Breast epithelium (tissue), 4 donors: ENCODE measurements at regions of chr4 and their contacts with region 1.

Region 1: DNA sequence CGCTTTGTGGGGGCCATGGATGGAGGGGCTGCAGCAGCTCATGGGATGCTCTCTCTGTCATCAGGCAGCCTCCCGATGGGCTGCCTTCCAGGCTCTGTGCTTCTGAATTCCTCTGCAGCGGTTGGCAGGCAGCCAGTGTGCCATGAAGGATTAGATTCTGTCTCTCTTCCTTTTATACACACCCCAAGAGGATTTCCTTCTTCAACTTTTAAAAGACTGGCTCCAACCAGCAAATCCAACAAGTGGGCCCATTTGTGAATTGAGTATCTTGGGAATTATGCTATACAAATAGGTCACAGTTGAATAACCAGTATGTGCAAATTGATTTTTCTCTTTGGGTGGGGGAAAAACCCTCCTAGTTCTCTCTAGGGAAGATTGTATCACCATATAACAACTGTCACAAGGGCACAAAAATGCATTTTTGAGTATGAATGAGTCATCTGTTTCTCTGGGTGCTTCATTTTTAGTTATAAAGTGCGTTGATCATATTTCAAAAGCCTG is 96.8 kb upstream of the FAT1 start:
- DNase-seq: no peak
- H3K4me3 ChIP-seq: no peak overlapping the region
- H3K27ac ChIP-seq: no peak overlapping the region
- H3K4me1 ChIP-seq: no peaks in the 10 kb centered on the region
- H3K27me3 ChIP-seq: no peaks in the 10 kb centered on the region
- CTCF ChIP-seq: no peak
- POLR2A ChIP-seq: no peak

Region 2: DNA sequence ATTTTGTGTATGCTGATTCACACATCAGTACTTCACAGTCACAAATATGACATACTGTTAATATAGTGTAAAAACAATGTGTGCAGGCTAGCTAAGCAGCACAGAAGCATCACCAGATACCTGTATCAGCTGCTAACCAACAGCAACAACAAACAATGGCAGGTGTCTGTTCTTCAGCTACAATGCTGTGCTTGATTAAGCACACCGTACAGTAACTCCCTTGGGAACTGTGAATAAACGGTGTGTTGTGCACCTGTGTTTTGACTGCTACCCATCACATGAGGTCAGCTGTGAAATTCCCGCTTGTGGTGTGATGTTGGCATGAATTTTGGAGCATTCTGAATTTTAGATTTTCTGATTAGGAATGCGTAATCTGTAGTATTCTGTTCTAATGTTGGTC is 282.9 kb after region 1 on chr4:
- intact Hi-C with region 1: no loop called
- DNase-seq: no peak
- H3K4me3 ChIP-seq: no peak overlapping the region
- H3K27ac ChIP-seq: no peak overlapping the region
- H3K4me1 ChIP-seq: no peaks in the 10 kb centered on the region
- H3K27me3 ChIP-seq: no peaks in the 10 kb centered on the region
- CTCF ChIP-seq: no peak
- POLR2A ChIP-seq: no peak

Region 3: GRCh38 chr4:187321711-187322110 is 501.3 kb after region 1 on chr4:
- intact Hi-C with region 1: loop called (anchors 10 kb)
- DNase-seq: no peak
- H3K4me3 ChIP-seq: no peak overlapping the region
- H3K27ac ChIP-seq: no peak overlapping the region
- H3K4me1 ChIP-seq: no peaks in the 10 kb centered on the region
- H3K27me3 ChIP-seq: no peaks in the 10 kb centered on the region
- CTCF ChIP-seq: no peak
- POLR2A ChIP-seq: no peak

Region 4: DNA sequence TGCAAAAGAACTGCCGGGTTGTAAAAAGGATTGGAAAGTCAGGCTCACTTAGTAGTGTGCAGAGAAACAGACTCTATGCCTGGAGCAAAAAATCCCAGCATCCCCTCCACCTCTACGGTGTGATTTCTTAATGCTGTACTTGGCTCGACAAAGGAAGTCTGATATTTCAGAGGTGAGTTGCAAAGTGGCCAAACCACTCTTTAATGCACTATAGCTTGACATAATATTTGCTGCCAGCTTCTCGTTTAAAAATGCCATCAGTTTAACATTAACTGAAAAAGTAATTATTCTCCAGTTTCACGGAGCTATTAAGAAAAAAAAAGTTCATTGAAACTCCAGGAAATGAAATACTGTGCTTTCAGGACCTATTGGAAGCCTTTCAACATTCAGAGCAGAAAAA is 726.9 kb after region 1 on chr4:
- intact Hi-C with region 1: no loop called
- DNase-seq: no peak
- H3K4me3 ChIP-seq: peak overlapping the region in 2 of 3 donors; percentile 3 to 8
- H3K27ac ChIP-seq: no peak overlapping the region
- H3K4me1 ChIP-seq: no peaks in the 10 kb centered on the region
- H3K27me3 ChIP-seq: no peaks in the 10 kb centered on the region
- CTCF ChIP-seq: no peak
- POLR2A ChIP-seq: no peak